CD4-positive, alpha-beta T cell (primary cell): ENCODE measurements at regions of chr1 and their contacts with region 1.

Region 1: GRCh38 chr1:84387480-84388163 is 10.7 kb upstream of the DNASE2B start:
- DNase-seq: peak in 1 of 14 experiments; percentile 10
- ATAC-seq: peak; percentile 29
- H3K4me3 ChIP-seq: no peak overlapping the region
- H3K4me3 Mint-ChIP-seq: no peak overlapping the region
- H3K27ac ChIP-seq: no peak overlapping the region
- H3K27ac Mint-ChIP-seq: no peak overlapping the region
- H3K4me1 ChIP-seq: no peaks in the 10 kb centered on the region
- H3K4me1 Mint-ChIP-seq: no peaks in the 10 kb centered on the region
- H3K27me3 ChIP-seq: no peaks in the 10 kb centered on the region
- H3K27me3 Mint-ChIP-seq: no peaks in the 10 kb centered on the region
- CTCF ChIP-seq: no peak

Region 2: GRCh38 chr1:83849191-83850061 is 538.2 kb before region 1 on chr1:
- CTCF ChIA-PET with region 1: no interaction called
- POLR2A ChIA-PET with region 1: no interaction called
- intact Hi-C with region 1: no loop called
- DNase-seq: no peak
- ATAC-seq: no peak
- H3K4me3 ChIP-seq: no peak overlapping the region
- H3K4me3 Mint-ChIP-seq: no peak overlapping the region
- H3K27ac ChIP-seq: no peak overlapping the region
- H3K27ac Mint-ChIP-seq: no peak overlapping the region
- H3K4me1 ChIP-seq: no peaks in the 10 kb centered on the region
- H3K4me1 Mint-ChIP-seq: no peaks in the 10 kb centered on the region
- H3K27me3 ChIP-seq: no peaks in the 10 kb centered on the region
- H3K27me3 Mint-ChIP-seq: no peaks in the 10 kb centered on the region
- CTCF ChIP-seq: no peak

Region 3: GRCh38 chr1:84135341-84135740 is 252.3 kb before region 1 on chr1:
- CTCF ChIA-PET with region 1: no interaction called
- POLR2A ChIA-PET with region 1: no interaction called
- intact Hi-C with region 1: loop called (anchors 2 to 5 kb)
- DNase-seq: no peak
- ATAC-seq: no peak
- H3K4me3 ChIP-seq: no peak overlapping the region
- H3K4me3 Mint-ChIP-seq: no peak overlapping the region
- H3K27ac ChIP-seq: no peak overlapping the region
- H3K27ac Mint-ChIP-seq: no peak overlapping the region
- H3K4me1 ChIP-seq: no peaks in the 10 kb centered on the region
- H3K4me1 Mint-ChIP-seq: peaks cover 13% of the 10 kb centered on the region
- H3K27me3 ChIP-seq: no peaks in the 10 kb centered on the region
- H3K27me3 Mint-ChIP-seq: no peaks in the 10 kb centered on the region
- CTCF ChIP-seq: no peak